Uterus (tissue), 4 donors: ENCODE measurements at regions of chr17 and their contacts with region 1.

Region 1: DNA sequence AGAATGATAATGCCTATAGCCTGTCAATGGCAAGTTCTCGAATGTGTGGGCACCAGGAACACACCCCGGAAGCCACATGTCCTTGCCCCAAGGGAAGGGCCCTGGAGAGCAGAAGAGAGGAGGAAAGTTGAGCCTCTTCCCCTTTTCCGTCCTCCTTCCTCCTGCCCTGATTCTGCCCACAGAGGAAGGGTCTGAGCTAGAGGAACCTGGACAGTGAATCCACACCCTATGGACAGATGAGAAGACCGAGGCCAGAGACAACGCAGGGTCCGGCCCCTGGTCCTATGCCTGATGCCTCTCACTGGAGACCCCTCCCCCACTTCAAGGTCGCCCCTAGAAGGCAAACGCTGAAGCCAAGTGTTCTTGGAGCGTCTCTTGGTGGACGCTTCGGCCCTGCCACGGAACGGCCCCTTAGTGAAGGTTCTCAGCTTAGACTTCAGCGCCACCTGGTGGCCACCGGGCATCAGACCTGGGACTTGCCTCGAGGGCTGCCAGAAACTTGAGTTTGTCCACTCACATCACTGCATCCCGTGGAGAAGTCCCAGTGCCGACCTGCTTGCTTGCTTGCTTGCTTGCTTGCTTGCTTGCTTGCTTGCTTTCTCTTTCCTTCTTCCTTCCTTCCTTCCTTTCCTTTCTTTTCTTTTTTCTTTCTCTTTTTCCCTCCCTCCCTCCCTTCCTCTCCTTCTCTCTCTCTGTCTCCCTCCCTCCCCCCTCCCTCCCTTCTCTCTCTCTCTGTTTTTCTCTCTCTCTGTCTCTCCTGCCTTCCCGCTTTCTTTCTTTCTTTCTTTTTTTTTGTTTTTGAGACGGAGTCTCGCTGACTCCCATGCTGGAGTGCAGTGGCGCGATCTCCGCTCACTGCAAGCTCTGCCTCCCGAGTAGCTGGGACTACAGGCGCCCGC is 20.6 kb upstream of the SPNS3 start:
- DNase-seq: peak; percentile 93 to 94
- H3K4me3 ChIP-seq: no peak overlapping the region
- H3K27ac ChIP-seq: peak overlapping the region; percentile 12 to 54
- H3K4me1 ChIP-seq: no peaks in the 10 kb centered on the region
- H3K27me3 ChIP-seq: no peaks in the 10 kb centered on the region
- CTCF ChIP-seq: peak; percentile 88 to 96 (median 93)
- POLR2A ChIP-seq: no peak

Region 2: GRCh38 chr17:4209611-4210010 is 203.6 kb before region 1 on chr17:
- intact Hi-C with region 1: loop called (anchors 5 kb)
- DNase-seq: no peak
- H3K4me3 ChIP-seq: no peak overlapping the region
- H3K27ac ChIP-seq: no peak overlapping the region
- H3K4me1 ChIP-seq: no peaks in the 10 kb centered on the region
- H3K27me3 ChIP-seq: no peaks in the 10 kb centered on the region
- CTCF ChIP-seq: no peak
- POLR2A ChIP-seq: no peak